Astrocyte of the cerebellum (primary cell): ENCODE measurements at regions of chr5 and their contacts with region 1.

Region 1: DNA sequence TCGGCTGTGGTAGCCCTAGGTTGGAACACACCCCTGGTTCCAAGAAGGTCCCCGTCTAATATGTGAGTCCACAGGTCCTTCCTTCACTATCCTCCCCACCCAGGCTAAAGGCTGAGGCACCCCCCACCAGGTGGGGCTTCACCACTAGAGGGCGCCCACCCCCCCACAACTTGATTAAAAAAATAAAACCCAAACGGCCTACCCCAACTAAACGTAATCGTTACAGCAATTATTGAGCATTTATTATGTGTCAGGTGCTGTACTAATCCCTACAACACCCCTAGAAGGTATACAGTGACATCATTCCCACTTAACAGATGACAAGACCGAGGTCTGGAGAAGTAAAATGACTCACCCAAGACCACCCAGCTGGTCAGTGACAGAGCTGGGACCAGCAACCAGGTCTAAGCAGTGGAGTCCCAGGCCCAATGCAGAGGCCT is 65.0 kb downstream of the FGF18 start:
- DNase-seq: no peak
- H3K4me3 ChIP-seq: no peak overlapping the region
- CTCF ChIP-seq: peak; percentile 67

Region 2: DNA sequence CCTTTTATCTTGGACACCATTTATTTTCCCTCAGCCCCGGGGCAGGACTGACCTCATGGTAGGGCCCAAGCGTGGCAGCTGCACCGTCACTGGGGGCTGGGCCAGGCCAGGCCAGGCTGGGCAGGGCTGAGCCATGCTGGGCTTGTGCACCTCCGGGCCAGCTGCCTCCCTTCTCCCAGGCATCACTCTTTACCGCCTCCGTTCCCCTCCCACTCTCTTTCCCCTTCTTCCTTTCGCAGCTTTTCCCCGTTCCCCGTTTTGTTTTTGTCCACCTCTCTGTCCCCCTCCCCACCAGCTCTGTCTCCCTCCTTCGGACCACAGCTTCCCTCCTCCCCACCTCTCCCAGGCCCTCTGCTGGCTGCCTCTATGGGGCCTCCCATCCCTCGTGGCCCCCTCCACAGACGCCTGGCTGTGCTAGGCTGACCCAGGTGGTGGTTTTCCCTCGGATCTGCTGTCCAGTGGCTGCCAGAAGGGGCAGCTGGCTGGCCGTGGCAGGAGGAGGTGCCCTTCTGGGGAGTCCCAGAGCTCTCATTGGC is 47.1 kb before region 1 on chr5:
- in situ Hi-C with region 1: loop called (anchors 5 kb)
- DNase-seq: no peak
- H3K4me3 ChIP-seq: no peak overlapping the region
- CTCF ChIP-seq: no peak

Region 3: GRCh38 chr5:171518916-171519315 is 34.4 kb after region 1 on chr5:
- in situ Hi-C with region 1: loop called (anchors 5 kb)
- DNase-seq: no peak
- H3K4me3 ChIP-seq: no peak overlapping the region
- CTCF ChIP-seq: no peak

Region 4: DNA sequence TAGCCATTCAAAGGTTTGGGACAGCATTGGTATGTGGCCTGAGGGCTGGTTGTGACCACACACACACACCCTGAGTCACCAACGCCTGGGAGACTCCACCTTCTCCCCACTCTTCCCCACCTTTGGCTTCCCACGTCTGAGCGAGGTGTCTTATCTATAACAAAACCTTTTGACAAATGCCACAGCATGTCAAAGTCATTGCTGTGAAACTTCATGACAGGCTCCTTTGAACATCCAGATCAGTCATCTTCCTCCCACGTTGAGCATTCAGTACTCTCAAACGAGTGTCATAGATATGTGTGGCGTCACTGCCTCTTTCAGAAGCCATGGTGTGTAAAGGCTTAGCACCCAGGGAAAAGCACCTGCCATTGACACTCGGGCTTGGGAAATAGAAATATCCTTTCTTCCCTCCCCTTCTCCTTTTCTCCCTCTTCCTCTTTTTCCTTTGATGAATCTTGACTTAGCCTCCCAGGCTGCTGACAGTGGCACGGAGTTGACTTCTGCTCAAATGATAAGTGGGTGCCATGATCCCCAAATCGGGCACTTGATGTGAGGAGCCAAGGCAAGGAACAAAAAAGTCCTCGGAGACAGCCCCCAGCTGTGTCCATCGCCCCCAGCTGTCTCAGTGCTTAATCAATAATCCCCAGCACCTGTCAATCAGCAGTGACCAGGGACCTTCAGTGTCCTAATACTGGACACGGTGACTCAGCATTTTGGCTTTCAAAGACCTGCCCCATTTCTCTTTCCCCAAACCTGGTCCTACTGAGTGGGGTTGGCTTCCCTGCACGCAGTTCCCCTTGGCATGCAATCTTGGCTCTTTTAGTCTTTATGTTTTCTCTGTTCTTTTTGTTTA is 49.8 kb after region 1 on chr5:
- in situ Hi-C with region 1: no loop called
- DNase-seq: no peak
- H3K4me3 ChIP-seq: no peak overlapping the region
- CTCF ChIP-seq: no peak